Activated CD4-positive, alpha-beta memory T cell treated with anti-CD3 and anti-CD28 coated beads for 36 hours (primary cell): ENCODE measurements at regions of chr3 and their contacts with region 1.

Region 1: GRCh38 chr3:153970741-153971347 is 150.3 kb upstream of the ARHGEF26 start:
- DNase-seq: no peak
- H3K4me3 Mint-ChIP-seq: no peak overlapping the region
- H3K27ac Mint-ChIP-seq: no peak overlapping the region
- H3K4me1 Mint-ChIP-seq: peaks cover 4% of the 10 kb centered on the region
- H3K27me3 Mint-ChIP-seq: no peaks in the 10 kb centered on the region

Region 2: DNA sequence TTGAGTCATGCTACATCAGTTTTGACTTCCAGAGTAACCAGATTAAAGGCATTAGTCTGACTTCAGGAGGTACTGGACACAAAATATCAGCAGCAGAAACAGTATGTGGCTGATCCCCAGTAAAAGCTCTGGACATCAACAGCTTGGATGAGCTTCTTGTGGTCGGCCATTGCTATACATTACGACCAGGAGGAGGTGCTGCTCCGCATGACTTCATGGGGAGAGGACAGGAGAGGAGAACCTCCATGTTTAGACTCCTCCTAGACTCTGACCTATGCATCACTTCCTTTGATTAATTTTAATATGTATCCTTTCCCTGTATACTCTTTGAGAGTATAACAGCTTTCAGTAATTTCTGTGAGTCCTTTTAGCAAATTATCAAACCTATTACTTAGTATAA is 135.3 kb before region 1 on chr3:
- CTCF ChIA-PET with region 1: no interaction called
- POLR2A ChIA-PET with region 1: no interaction called
- intact Hi-C with region 1: loop called (anchors 5 kb)
- DNase-seq: no peak
- H3K4me3 Mint-ChIP-seq: no peak overlapping the region
- H3K27ac Mint-ChIP-seq: no peak overlapping the region
- H3K4me1 Mint-ChIP-seq: no peaks in the 10 kb centered on the region
- H3K27me3 Mint-ChIP-seq: peaks cover 3% of the 10 kb centered on the region